Mammary epithelial cell (primary cell): ENCODE measurements at regions of chr12 and their contacts with region 1.

Region 1: DNA sequence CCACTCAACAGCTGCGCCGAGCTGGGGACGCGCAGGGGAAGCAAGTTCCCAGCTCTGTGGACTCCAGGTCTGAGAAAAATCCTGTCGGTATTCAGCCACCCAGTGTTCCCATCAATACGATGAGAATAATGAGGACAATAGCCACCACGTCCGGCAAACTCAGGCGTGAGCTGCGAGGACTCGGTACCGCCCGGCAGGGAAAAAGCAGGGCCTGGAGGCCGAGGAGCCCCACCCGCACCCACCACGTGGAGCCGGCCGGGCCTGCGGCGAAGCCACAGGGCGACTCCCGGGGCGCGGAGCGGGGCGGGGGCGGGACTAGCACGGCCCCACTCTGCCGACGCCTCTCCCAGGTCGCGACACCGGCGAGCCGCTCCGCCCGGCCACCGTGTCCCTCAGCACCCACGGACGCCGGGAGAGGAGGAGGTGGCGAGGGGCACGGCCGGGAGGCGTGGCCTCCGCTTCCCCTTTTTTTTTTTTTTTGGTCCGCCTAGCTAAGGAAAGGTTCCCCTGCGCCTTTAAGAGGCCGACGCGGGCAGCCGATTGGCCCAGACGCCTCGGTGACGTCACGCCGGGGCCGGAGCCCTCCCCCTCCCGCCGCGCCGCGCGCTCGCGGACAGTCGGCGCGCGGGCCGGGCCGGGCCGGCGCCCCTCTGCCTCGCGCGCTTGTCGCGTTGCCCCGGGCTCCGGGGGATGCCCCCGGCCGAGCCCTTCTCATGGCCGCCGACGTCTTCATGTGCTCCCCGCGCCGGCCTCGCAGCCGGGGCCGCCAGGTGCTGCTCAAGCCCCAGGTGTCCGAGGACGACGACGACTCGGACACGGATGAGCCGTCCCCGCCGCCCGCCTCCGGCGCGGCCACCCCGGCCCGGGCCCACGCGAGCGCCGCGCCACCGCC is at the start of gene MLXIP:
- DNase-seq: peak; percentile 89
- H3K4me3 ChIP-seq: peak within 1 kb of the TSS; percentile 61 to 83 (median 72)
- H3K27ac ChIP-seq: peak within 1 kb of the TSS; percentile 74
- H3K4me1 ChIP-seq: peaks cover 27% of the 10 kb centered on the region
- H3K27me3 ChIP-seq: no peaks in the 10 kb centered on the region
- CTCF ChIP-seq: no peak
- total RNA-seq, gene MLXIP: 17.7 to 53.6 TPM

Region 2: GRCh38 chr12:122035292-122035691 is 43.1 kb before region 1 on chr12:
- CTCF ChIA-PET with region 1: interaction called, 3 read pairs
- dilution Hi-C with region 1: loop called (anchors 5 kb)
- in situ Hi-C with region 1: no loop called
- intact Hi-C with region 1: no loop called
- DNase-seq: peak; percentile 69
- H3K4me3 ChIP-seq: no peak overlapping the region
- H3K27ac ChIP-seq: peak overlapping the region; percentile 42
- H3K4me1 ChIP-seq: peaks cover 19% of the 10 kb centered on the region
- H3K27me3 ChIP-seq: no peaks in the 10 kb centered on the region
- CTCF ChIP-seq: no peak

Region 3: DNA sequence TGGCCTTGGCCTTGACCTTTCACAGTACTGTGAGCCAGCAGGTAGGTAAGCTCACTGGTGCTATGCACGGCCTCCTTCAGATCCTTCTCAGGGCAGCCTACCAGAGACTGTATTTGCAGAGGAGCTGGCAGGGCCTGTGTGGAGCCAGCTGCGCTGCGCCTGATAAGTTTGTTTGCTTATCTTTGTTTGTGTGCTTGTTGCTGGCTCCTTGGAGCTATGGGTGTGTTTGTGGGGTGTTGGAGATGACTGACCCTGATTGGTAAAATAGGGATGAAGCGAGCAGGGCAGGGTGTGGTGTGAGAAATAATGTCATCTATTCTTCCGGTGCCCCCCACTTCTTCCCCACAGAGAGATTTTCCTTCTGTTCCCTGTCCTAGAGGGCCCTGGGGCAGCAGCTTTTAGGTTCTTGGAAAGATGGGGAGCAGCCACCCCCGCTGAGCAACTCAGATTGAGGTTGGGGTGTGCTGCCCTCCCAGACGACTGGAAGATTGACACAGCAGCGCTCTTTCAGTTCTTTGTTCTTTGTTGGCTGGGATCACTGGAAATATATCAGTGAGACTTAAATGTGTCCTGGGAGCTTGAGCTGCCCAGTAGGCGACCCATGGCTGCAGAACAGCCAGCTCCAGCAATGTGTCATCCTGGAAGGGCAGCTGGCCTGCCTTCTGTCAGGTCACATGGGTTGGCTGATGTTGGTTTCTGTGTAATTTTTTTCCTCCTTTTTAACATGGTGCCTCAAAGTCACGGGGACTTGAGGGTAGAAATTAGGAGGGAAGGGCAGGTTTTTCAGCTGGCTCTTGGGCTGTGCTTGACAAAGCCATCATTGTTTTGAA is 19.8 kb after region 1 on chr12:
- CTCF ChIA-PET with region 1: interaction called, 5 read pairs
- dilution Hi-C with region 1: no loop called
- in situ Hi-C with region 1: no loop called
- intact Hi-C with region 1: loop called (anchors 1 kb)
- DNase-seq: peak; percentile 64
- H3K4me3 ChIP-seq: no peak overlapping the region
- H3K27ac ChIP-seq: peak overlapping the region; percentile 85
- H3K4me1 ChIP-seq: peaks cover 53% of the 10 kb centered on the region
- H3K27me3 ChIP-seq: no peaks in the 10 kb centered on the region
- CTCF ChIP-seq: no peak

Region 4: DNA sequence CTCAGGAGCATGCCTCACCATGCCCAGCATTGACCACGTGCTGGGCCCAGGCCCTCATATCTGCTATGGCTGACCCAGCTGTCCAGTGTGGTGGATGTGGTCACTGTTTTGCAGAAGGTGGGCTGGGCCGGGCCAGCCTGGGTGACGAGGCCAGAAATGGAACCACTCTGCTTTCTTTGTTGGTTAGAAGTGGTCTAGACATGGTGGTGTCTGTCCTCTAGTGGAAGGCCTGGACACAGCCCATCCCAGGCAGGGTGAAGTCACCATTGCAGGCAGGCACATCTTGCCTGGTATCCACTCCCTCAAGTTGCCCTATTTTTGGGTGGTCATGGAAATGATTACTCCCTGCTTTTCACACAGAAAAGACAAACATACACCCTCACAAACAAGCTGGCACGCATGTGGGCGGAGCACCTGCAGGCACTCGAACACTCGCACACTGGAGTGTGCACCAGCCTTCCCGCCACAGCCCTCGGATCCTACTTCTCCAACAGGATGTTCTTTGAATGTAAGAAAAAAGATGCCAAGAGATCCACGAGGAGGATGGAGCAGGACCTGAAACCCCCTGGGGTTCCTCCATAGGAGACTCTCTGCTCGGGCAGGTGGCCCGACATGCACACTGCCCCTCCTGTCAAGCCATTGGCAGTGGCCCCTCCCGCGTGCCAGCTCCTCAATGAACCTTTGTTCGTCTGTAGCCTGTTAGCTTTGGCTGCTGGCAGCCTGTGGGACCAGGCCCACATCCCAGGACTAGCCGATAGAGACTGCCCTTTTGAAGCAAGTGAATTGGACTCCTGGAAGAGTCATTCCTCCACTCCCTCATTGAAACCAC is 38.5 kb after region 1 on chr12:
- CTCF ChIA-PET with region 1: no interaction called
- dilution Hi-C with region 1: loop called (anchors 5 kb)
- in situ Hi-C with region 1: loop called in 1 of 2 experiments (anchors 5 kb)
- intact Hi-C with region 1: loop called (anchors 1 kb)
- DNase-seq: no peak
- H3K4me3 ChIP-seq: no peak overlapping the region
- H3K27ac ChIP-seq: no peak overlapping the region
- H3K4me1 ChIP-seq: peaks cover 23% of the 10 kb centered on the region
- H3K27me3 ChIP-seq: no peaks in the 10 kb centered on the region
- CTCF ChIP-seq: peak; percentile 21 to 27

Region 5: DNA sequence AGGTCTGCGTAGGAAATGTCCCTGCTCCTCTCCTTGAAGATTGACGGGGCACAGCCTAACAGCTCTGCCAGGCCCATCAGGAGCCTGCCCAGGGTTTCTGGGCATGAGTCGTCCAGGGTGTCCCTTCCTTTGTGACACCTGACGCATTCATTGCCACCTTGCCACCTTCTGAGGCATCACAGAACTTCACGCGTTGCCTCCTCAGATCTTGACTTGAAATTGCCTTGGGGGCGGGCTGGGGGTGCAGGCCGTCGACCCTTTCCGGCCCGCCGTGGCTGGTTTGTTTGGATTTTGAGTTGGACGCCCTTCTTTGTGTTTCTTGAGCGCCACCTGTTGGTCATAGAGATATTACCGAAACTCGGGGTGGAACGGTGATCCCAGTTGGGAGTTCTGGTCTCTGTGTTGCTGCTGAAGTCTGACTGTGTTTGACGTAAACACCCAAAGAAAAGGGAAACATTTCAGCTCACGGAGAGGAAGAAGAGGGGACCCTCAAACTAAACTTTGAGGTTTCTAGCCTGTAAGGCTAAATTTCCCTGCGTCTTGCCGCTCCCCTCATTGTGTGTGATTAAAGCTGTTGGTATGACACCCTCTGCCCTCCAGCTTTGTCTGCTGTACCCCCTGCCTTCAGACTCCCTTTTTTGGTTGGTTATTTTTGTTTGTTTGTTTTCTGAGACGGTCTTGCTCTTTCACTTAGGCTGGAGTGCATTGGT is 44.8 kb after region 1 on chr12:
- CTCF ChIA-PET with region 1: no interaction called
- dilution Hi-C with region 1: loop called (anchors 5 kb)
- in situ Hi-C with region 1: loop called in 1 of 2 experiments (anchors 5 kb)
- intact Hi-C with region 1: loop called (anchors 2 kb)
- DNase-seq: peak; percentile 65
- H3K4me3 ChIP-seq: no peak overlapping the region
- H3K27ac ChIP-seq: no peak overlapping the region
- H3K4me1 ChIP-seq: peaks cover 9% of the 10 kb centered on the region
- H3K27me3 ChIP-seq: no peaks in the 10 kb centered on the region
- CTCF ChIP-seq: peak; percentile 52 to 71

Region 6: GRCh38 chr12:122148657-122149056 is 70.3 kb after region 1 on chr12:
- CTCF ChIA-PET with region 1: no interaction called
- dilution Hi-C with region 1: loop called (anchors 10 kb)
- in situ Hi-C with region 1: no loop called
- intact Hi-C with region 1: no loop called
- DNase-seq: no peak
- H3K4me3 ChIP-seq: no peak overlapping the region
- H3K27ac ChIP-seq: no peak overlapping the region
- H3K4me1 ChIP-seq: no peaks in the 10 kb centered on the region
- H3K27me3 ChIP-seq: no peaks in the 10 kb centered on the region
- CTCF ChIP-seq: no peak